AG04449 (cell line): ENCODE measurements at regions of chr20 and their contacts with region 1.

Region 1: DNA sequence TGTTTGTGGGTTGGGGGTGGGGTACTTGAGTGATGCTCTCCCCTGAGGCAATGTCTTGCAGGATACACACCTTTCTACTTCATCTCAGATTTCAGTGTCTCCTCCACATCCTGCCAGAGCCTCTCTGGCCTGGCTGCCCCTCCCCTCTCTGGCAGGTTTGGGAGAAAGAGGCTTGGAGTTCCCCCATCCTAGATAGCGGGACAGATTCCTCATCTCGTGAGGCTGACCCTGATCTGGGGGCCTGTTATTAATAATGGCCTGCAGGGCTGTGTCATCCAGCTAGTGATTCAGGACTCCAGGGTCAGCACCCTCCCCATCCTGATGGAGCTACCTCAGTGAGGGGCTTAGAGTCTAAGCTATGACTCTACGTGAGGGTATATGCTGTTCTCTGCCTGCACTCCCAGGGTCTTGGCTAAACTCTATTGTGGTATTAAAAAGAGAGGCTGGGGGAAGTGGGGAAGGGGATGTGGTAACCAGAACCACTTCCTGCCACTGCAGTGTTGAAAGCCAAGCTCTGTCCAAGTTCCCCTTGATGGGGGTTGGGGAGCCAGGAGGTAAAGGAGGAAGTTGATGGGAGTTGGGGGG is 3.7 kb upstream of the MMP9 start:
- DNase-seq: no peak
- H3K4me3 ChIP-seq: no peak overlapping the region
- CTCF ChIP-seq: no peak

Region 2: GRCh38 chr20:46022411-46023147 is 17.6 kb after region 1 on chr20:
- CTCF ChIA-PET with region 1: interaction called, 12 read pairs
- POLR2A ChIA-PET with region 1: no interaction called
- DNase-seq: no peak
- H3K4me3 ChIP-seq: peak overlapping the region; percentile 18; the same call in 1 of the 2 replicates
- CTCF ChIP-seq: peak; percentile 71

Region 3: GRCh38 chr20:46070215-46070900 is 65.4 kb after region 1 on chr20:
- CTCF ChIA-PET with region 1: no interaction called
- POLR2A ChIA-PET with region 1: no interaction called
- DNase-seq: peak; percentile 60
- H3K4me3 ChIP-seq: no peak overlapping the region
- CTCF ChIP-seq: no peak